Activated CD4-positive, alpha-beta memory T cell treated with anti-CD3 and anti-CD28 coated beads for 36 hours (primary cell): ENCODE measurements at regions of chr10 and their contacts with region 1.

Region 1: DNA sequence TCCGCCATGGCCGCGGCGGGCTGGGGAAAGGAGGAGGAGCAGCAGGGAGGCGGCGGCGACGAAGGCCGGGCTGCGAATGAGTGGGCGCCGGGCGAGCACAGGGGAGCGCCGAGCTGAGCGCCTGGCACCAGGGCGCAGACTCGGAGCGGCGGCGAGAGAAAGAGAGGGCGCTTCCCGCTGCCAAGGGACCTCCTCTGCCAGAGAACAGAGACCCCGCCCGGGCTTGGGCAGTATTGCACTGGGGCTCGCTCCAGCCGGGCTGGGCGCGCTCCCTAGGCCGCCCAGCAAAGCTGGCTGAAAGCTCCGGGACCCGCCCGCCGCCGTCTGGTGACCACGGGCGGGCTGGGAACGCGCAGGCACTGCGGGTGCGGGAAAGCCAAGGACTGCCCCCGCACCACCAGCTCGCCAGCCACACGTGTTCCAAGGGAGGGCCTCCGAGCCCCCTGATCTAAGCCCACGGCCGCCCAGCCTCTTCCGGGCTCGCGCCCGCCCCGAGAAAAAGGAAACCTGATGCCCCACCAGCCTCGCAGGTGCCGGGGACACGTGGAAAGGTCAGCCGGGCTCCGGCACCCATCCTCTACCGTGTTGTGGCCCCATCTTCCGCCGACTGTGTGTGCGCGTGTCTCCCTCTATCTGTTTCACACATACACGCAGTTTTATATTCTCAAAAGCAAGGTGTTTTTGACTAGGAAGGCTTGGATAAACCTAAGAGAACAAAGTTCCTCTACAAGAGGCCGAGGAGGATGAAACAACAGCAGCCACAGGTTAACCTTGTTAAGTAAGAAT is at the start of gene CCDC6:
- DNase-seq: peak; percentile 95
- H3K4me3 Mint-ChIP-seq: peak within 1 kb of the TSS; percentile 91
- H3K27ac Mint-ChIP-seq: peak within 1 kb of the TSS; percentile 96
- H3K4me1 Mint-ChIP-seq: peaks cover 59% of the 10 kb centered on the region
- H3K27me3 Mint-ChIP-seq: no peaks in the 10 kb centered on the region
- total RNA-seq, gene CCDC6: 49.1 to 51.5 TPM

Region 2: DNA sequence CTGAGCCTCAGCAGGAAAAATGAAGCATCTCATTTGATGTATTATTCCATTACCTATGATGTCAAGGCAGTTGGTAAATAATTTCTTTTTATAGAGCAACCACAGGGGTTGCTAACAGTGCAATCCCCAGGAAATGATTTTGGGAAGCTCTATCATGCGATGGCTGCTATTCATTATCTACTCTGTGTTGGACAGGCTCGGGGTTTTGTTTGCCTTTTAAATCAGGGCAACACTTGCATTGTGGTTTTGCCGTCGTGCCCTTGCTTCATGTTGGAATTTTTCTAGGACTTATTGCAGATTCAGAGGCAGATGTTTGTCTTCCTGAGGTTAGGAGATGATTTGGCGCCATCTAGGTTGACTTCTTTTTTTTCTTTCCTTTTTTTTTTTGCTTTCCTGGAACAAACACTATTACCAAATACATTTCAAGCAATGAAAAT is 1265.5 kb before region 1 on chr10:
- CTCF ChIA-PET with region 1: no interaction called
- POLR2A ChIA-PET with region 1: no interaction called
- intact Hi-C with region 1: no loop called
- DNase-seq: no peak
- H3K4me3 Mint-ChIP-seq: no peak overlapping the region
- H3K27ac Mint-ChIP-seq: no peak overlapping the region
- H3K4me1 Mint-ChIP-seq: no peaks in the 10 kb centered on the region
- H3K27me3 Mint-ChIP-seq: no peaks in the 10 kb centered on the region

Region 3: GRCh38 chr10:59625721-59626522 is 280.7 kb before region 1 on chr10:
- CTCF ChIA-PET with region 1: interaction called, 5 read pairs
- POLR2A ChIA-PET with region 1: no interaction called
- intact Hi-C with region 1: loop called (anchors 1 kb)
- DNase-seq: peak; percentile 46
- H3K4me3 Mint-ChIP-seq: no peak overlapping the region
- H3K27ac Mint-ChIP-seq: no peak overlapping the region
- H3K4me1 Mint-ChIP-seq: peaks cover 2% of the 10 kb centered on the region
- H3K27me3 Mint-ChIP-seq: peaks cover 2% of the 10 kb centered on the region

Region 4: GRCh38 chr10:59830601-59831259 is 75.9 kb before region 1 on chr10:
- CTCF ChIA-PET with region 1: interaction called, 12 read pairs
- POLR2A ChIA-PET with region 1: interaction called, 4 read pairs
- intact Hi-C with region 1: loop called (anchors 1 kb)
- DNase-seq: peak; percentile 32
- H3K4me3 Mint-ChIP-seq: no peak overlapping the region
- H3K27ac Mint-ChIP-seq: no peak overlapping the region
- H3K4me1 Mint-ChIP-seq: peaks cover 52% of the 10 kb centered on the region
- H3K27me3 Mint-ChIP-seq: no peaks in the 10 kb centered on the region

Region 5: GRCh38 chr10:59879361-59879913 is 27.2 kb before region 1 on chr10:
- CTCF ChIA-PET with region 1: interaction called, 15 read pairs
- POLR2A ChIA-PET with region 1: interaction called, 46 read pairs
- intact Hi-C with region 1: loop called (anchors 1 kb)
- DNase-seq: no peak
- H3K4me3 Mint-ChIP-seq: peak overlapping the region; percentile 45
- H3K27ac Mint-ChIP-seq: peak overlapping the region; percentile 90
- H3K4me1 Mint-ChIP-seq: peaks cover 85% of the 10 kb centered on the region
- H3K27me3 Mint-ChIP-seq: no peaks in the 10 kb centered on the region

Region 6: DNA sequence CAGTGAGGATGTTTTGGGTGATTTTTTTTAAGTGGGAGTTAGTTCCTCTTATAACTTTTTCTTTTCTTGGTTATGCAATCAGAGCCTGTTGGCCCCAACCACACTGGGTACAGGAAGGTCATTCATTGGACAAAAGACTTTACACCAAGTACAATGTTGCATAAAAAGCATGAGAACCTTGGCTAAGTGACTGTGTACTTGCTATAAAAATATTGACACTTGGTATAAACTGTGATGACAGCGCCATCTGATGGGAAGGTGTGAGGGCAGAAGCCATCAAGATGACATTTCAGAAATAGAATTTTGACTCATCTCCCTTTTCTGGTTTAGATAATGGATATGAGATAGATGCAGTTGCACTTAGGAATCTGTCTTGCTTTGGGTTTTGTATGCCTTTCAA is 126.1 kb after region 1 on chr10:
- CTCF ChIA-PET with region 1: interaction called, 4 read pairs
- POLR2A ChIA-PET with region 1: no interaction called
- intact Hi-C with region 1: loop called (anchors 1 kb)
- DNase-seq: peak; percentile 67
- H3K4me3 Mint-ChIP-seq: no peak overlapping the region
- H3K27ac Mint-ChIP-seq: no peak overlapping the region
- H3K4me1 Mint-ChIP-seq: peaks cover 10% of the 10 kb centered on the region
- H3K27me3 Mint-ChIP-seq: no peaks in the 10 kb centered on the region

Region 7: DNA sequence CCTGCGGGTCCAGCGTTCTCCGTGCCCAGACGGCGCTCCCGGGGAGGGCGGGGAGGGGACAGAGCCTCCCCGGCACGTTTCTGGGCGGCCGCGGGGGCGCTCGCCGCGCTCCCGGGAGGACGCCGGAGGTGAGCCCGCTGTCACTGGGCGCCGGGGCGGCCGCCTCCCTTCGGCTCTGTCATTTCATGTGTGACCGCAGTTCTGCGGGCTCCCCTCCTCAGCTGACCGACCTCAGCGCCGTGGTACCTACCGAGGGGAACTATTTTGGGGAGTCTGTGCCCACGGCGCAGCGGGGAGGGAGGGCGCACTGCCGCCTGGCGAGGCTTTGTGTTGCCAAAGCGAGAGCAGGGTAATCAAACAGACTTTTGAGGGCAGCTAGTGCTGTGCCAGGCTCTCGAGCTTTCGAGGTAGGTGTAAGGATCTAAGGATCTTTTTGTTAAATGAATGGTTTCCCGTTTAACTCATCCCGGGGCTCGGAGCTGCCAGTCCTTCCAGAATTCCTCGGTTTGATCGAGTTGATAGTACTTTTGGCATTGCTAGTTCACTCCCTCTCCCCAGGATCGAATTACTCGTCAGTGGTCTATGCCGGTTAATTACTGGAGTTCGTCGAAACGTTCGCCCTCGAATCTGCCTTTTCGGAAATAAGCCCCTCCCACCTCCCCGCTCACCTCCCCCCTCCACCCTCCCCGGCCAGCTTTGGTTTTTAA is 1996.8 kb after region 1 on chr10:
- CTCF ChIA-PET with region 1: no interaction called
- POLR2A ChIA-PET with region 1: no interaction called
- intact Hi-C with region 1: loop called (anchors 10 kb)
- DNase-seq: peak; percentile 84
- H3K4me3 Mint-ChIP-seq: peak overlapping the region; percentile 90
- H3K27ac Mint-ChIP-seq: peak overlapping the region; percentile 95
- H3K4me1 Mint-ChIP-seq: peaks cover 45% of the 10 kb centered on the region
- H3K27me3 Mint-ChIP-seq: no peaks in the 10 kb centered on the region